ENCODE measurements at regions of chr16 and their contacts with region 1.

Region 1: GRCh38 chr16:81723098-81723723 is 55.9 kb upstream of the PLCG2 start:
- DNase-seq: peak; percentile 69 to 85
- H3K4me3 ChIP-seq: no peak overlapping the region
- H3K4me3 Mint-ChIP-seq: no peak overlapping the region
- H3K27ac Mint-ChIP-seq: no peak overlapping the region
- H3K4me1 ChIP-seq: peaks cover 6% of the 10 kb centered on the region; the same call in 1 of the 2 replicates
- H3K4me1 Mint-ChIP-seq: no peaks in the 10 kb centered on the region
- H3K27me3 ChIP-seq: no peaks in the 10 kb centered on the region
- H3K27me3 Mint-ChIP-seq: peaks cover 2% of the 10 kb centered on the region
- CTCF ChIP-seq: peak; percentile 58 to 78

Region 2: GRCh38 chr16:81366316-81366932 is 356.8 kb before region 1 on chr16:
- CTCF ChIA-PET with region 1: no interaction called
- POLR2A ChIA-PET with region 1: no interaction called
- intact Hi-C with region 1: loop called (anchors 1 kb)
- DNase-seq: peak in 1 of 2 experiments; percentile 56
- H3K4me3 ChIP-seq: no peak overlapping the region
- H3K4me3 Mint-ChIP-seq: no peak overlapping the region
- H3K27ac Mint-ChIP-seq: no peak overlapping the region
- H3K4me1 ChIP-seq: no peaks in the 10 kb centered on the region
- H3K4me1 Mint-ChIP-seq: no peaks in the 10 kb centered on the region
- H3K27me3 ChIP-seq: no peaks in the 10 kb centered on the region
- H3K27me3 Mint-ChIP-seq: no peaks in the 10 kb centered on the region
- CTCF ChIP-seq: peak; percentile 64 to 83

Region 3: GRCh38 chr16:81623363-81624102 is 99.7 kb before region 1 on chr16:
- CTCF ChIA-PET with region 1: no interaction called
- POLR2A ChIA-PET with region 1: no interaction called
- intact Hi-C with region 1: loop called (anchors 1 kb)
- DNase-seq: peak in 1 of 2 experiments; percentile 54
- H3K4me3 ChIP-seq: no peak overlapping the region
- H3K4me3 Mint-ChIP-seq: no peak overlapping the region
- H3K27ac Mint-ChIP-seq: no peak overlapping the region
- H3K4me1 ChIP-seq: no peaks in the 10 kb centered on the region
- H3K4me1 Mint-ChIP-seq: no peaks in the 10 kb centered on the region
- H3K27me3 ChIP-seq: no peaks in the 10 kb centered on the region
- H3K27me3 Mint-ChIP-seq: no peaks in the 10 kb centered on the region
- CTCF ChIP-seq: peak; percentile 57 to 64

Region 4: DNA sequence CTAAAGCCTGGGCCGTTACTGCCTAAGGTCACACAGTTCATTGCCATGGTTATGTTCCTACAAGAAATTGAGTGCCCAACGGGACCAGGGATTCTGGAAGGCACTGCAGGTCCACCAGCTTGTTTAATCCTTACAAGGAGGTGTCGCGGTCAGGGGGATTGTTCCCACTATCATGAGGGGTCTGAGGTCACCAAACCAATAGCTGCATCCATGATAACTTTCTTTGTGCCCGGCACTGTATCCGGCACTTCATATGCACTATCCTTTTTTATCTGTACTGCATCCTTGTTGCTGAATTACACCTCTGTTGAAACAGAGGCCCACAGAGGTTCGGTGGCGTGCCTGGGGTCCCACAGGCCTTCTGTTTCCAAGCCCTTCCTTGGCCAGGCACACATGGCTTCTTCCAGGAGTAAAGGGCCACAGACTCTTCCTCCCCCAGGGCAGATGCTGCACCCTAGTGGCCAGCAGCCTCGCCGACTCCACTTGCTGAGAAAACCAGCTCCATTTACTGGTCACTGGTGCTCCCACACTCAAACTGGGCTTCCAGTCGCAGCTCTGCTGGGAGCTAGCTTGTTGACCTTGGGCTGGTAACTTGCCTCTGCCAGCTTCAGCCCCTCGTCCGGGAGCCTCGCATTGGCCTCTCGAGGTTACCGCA is 26.1 kb before region 1 on chr16:
- CTCF ChIA-PET with region 1: interaction called, 3 read pairs
- POLR2A ChIA-PET with region 1: no interaction called
- intact Hi-C with region 1: loop called (anchors 1 kb)
- DNase-seq: peak; percentile 67 to 76
- H3K4me3 ChIP-seq: no peak overlapping the region
- H3K4me3 Mint-ChIP-seq: no peak overlapping the region
- H3K27ac Mint-ChIP-seq: no peak overlapping the region
- H3K4me1 ChIP-seq: no peaks in the 10 kb centered on the region
- H3K4me1 Mint-ChIP-seq: no peaks in the 10 kb centered on the region
- H3K27me3 ChIP-seq: no peaks in the 10 kb centered on the region
- H3K27me3 Mint-ChIP-seq: no peaks in the 10 kb centered on the region
- CTCF ChIP-seq: peak; percentile 74 to 91

Region 5: GRCh38 chr16:81707411-81708265 is 15.6 kb before region 1 on chr16:
- CTCF ChIA-PET with region 1: no interaction called
- POLR2A ChIA-PET with region 1: no interaction called
- intact Hi-C with region 1: no loop called
- DNase-seq: no peak
- H3K4me3 ChIP-seq: no peak overlapping the region
- H3K4me3 Mint-ChIP-seq: no peak overlapping the region
- H3K27ac Mint-ChIP-seq: no peak overlapping the region
- H3K4me1 ChIP-seq: peaks cover 4% of the 10 kb centered on the region; the same call in 1 of the 2 replicates
- H3K4me1 Mint-ChIP-seq: peaks cover 8% of the 10 kb centered on the region
- H3K27me3 ChIP-seq: no peaks in the 10 kb centered on the region
- H3K27me3 Mint-ChIP-seq: no peaks in the 10 kb centered on the region
- CTCF ChIP-seq: no peak

Region 6: DNA sequence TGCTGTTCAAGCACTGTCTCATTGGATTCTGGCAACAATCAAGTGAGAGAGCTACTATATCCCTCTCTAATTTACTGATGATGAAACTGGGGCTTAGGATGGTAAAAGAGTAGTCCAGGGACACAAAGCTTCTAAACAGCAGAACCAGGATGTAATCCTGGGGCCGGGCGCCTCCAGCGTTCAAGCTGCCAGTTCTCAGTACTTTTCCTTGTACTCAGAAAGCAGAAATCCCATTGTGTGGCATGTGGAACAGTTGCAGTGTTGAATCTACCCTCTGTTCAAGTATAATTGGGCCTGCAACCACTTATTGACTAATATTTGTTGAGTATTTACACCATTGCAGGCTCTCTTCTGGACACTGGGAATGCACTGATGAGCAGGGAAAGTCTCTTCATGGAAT is 889.1 kb after region 1 on chr16:
- CTCF ChIA-PET with region 1: no interaction called
- POLR2A ChIA-PET with region 1: no interaction called
- intact Hi-C with region 1: no loop called
- DNase-seq: no peak
- H3K4me3 ChIP-seq: no peak overlapping the region
- H3K4me3 Mint-ChIP-seq: no peak overlapping the region
- H3K27ac Mint-ChIP-seq: no peak overlapping the region
- H3K4me1 ChIP-seq: no peaks in the 10 kb centered on the region
- H3K4me1 Mint-ChIP-seq: no peaks in the 10 kb centered on the region
- H3K27me3 ChIP-seq: no peaks in the 10 kb centered on the region; the same call in 1 of the 2 replicates
- H3K27me3 Mint-ChIP-seq: no peaks in the 10 kb centered on the region
- CTCF ChIP-seq: no peak